CD8-positive, alpha-beta T cell (primary cell): ENCODE measurements at regions of chr20 and their contacts with region 1.

Region 1: DNA sequence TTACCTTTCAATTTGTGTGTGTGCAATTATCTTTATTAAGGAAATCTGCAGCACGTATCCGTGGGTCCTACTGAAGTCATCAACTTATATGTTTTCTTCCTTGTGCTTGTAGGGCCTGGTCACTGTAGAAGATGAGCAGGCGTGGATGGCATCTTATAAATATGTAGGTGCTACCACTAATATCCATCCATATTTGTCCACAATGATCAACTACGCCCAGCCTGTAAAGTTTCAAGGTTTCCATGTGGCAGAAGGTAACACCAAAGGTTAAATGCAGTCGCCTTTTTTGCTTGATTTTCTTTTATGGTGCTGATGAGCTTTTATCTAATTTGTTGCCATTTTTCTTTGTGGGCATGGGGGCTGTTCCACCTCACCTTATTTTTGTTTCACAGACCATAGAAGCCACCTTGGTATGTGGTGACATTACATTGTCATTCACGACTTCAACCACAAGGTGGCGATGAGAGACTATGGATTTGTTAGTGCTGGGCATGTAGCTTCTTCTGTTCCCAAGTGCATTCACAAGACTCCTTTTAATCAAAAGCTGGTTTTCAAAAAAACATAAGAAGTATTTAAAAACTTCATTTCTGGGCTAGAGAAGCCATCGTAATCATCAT is 106.5 kb upstream of the LAMP5 start:
- DNase-seq: peak in 6 of 9 experiments; percentile 6 to 51 (median 24)
- ATAC-seq: no peak
- H3K4me3 ChIP-seq: no peak overlapping the region
- H3K4me3 Mint-ChIP-seq: no peak overlapping the region
- H3K27ac ChIP-seq: no peak overlapping the region
- H3K27ac Mint-ChIP-seq: no peak overlapping the region
- H3K4me1 ChIP-seq: no peaks in the 10 kb centered on the region
- H3K4me1 Mint-ChIP-seq: no peaks in the 10 kb centered on the region
- H3K27me3 ChIP-seq: no peaks in the 10 kb centered on the region
- H3K27me3 Mint-ChIP-seq: no peaks in the 10 kb centered on the region
- CTCF ChIP-seq: peak; percentile 66

Region 2: DNA sequence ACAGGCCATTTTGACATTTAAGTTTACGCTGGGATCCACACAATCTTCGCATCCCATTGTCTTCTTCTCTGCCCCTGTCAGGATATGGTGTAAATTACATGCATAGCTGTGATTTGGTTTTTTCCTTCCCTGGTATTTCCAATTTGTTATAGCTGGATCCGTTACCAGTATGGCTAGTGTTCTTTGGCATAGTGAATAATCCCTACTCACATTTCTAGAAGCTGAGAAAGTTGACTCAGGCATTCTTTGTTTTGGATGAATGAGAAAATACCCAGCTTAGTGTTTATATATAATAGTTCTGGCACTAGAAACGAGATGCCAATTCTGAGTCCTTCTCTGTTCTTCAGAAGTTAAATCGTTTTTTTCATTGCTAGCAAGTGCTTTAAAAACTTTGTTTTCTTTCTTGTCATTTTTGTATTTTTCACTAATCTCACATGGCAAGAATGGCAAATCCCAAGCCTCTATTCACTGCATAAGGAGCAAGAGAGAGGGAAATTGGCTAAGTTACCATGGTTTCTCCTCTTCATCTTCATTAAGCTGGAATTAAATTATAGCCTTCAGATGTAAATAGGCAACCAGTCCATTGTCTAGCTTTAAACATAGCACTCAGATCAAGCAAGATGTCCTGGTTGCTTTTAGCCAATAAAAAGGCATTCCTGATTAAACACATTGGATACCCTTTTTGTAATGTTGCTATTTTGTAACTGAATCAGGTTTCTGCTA is 14.6 kb after region 1 on chr20:
- CTCF ChIA-PET with region 1: interaction called, 28 read pairs
- POLR2A ChIA-PET with region 1: no interaction called
- intact Hi-C with region 1: no loop called
- DNase-seq: no peak
- ATAC-seq: no peak
- H3K4me3 ChIP-seq: no peak overlapping the region
- H3K4me3 Mint-ChIP-seq: no peak overlapping the region
- H3K27ac ChIP-seq: no peak overlapping the region
- H3K27ac Mint-ChIP-seq: no peak overlapping the region
- H3K4me1 ChIP-seq: no peaks in the 10 kb centered on the region
- H3K4me1 Mint-ChIP-seq: no peaks in the 10 kb centered on the region
- H3K27me3 ChIP-seq: no peaks in the 10 kb centered on the region
- H3K27me3 Mint-ChIP-seq: no peaks in the 10 kb centered on the region
- CTCF ChIP-seq: no peak

Region 3: DNA sequence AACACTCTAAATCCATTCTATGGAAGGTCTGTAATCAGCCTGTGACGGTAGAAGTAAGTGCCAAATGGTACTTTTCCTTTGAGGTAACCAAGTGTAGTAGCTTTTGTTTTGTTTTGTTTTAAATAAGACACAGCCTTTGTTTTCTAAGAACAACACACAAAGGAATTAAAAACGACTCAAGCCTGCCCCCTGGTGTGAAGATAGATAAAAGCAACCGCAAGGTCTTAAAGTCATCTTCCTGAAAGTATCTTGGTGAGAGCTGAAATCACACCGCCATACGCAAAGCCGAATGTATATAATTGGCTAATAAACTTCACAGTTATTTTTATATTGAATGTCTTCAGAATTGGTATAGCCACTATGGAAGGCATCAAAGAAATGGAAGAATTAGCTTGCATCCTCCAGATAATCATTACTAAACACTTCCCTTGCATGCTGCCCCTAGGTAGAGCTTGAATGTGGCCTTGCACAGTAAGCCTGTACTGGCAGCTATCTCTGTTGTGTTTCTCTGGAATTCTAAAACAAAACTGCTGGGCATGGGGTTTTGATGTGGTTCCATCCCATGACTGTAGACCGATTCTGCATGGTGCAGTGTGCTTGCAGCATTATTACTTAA is 202.1 kb after region 1 on chr20:
- CTCF ChIA-PET with region 1: interaction called, 5 read pairs
- POLR2A ChIA-PET with region 1: no interaction called
- intact Hi-C with region 1: loop called (anchors 2 to 10 kb)
- DNase-seq: peak in 5 of 9 experiments; percentile 5 to 38 (median 20)
- ATAC-seq: no peak
- H3K4me3 ChIP-seq: no peak overlapping the region
- H3K4me3 Mint-ChIP-seq: no peak overlapping the region
- H3K27ac ChIP-seq: no peak overlapping the region
- H3K27ac Mint-ChIP-seq: no peak overlapping the region
- H3K4me1 ChIP-seq: no peaks in the 10 kb centered on the region
- H3K4me1 Mint-ChIP-seq: no peaks in the 10 kb centered on the region
- H3K27me3 ChIP-seq: no peaks in the 10 kb centered on the region
- H3K27me3 Mint-ChIP-seq: peaks cover 2% of the 10 kb centered on the region
- CTCF ChIP-seq: peak; percentile 31

Region 4: DNA sequence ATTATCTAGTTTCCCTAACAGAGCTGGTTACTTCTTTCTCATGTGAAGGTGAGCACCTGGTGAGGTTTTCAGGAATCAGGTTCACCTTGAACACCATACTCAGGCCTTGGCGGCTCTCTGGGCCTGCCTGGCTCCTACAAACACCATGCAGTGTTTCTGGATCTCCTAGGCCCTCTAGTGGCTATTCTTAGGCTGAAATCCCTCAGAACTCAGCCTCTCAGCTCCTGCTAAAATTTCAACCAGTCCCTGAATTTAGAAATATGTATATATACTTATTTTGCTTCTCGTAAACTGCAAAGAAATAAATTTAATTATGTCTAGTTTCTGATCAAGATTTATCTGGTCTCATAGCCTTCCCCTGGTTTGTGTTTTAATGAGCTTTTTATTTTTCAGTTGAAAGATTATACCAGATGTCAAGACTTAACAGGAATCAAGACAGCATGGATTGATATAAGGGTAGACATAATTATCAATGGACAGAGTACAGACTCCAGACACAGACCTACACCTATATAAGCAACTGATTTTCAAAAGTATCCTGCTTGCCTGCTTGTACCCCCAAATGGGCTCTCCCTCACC is 682.8 kb after region 1 on chr20:
- CTCF ChIA-PET with region 1: interaction called, 3 read pairs
- POLR2A ChIA-PET with region 1: no interaction called
- intact Hi-C with region 1: loop called (anchors 5 kb)
- DNase-seq: peak in 5 of 9 experiments; percentile 5 to 56 (median 24)
- ATAC-seq: peak; percentile 58
- H3K4me3 ChIP-seq: no peak overlapping the region
- H3K4me3 Mint-ChIP-seq: no peak overlapping the region
- H3K27ac ChIP-seq: no peak overlapping the region
- H3K27ac Mint-ChIP-seq: no peak overlapping the region
- H3K4me1 ChIP-seq: no peaks in the 10 kb centered on the region
- H3K4me1 Mint-ChIP-seq: no peaks in the 10 kb centered on the region
- H3K27me3 ChIP-seq: no peaks in the 10 kb centered on the region
- H3K27me3 Mint-ChIP-seq: peaks cover 6% of the 10 kb centered on the region
- CTCF ChIP-seq: peak; percentile 52

Region 5: DNA sequence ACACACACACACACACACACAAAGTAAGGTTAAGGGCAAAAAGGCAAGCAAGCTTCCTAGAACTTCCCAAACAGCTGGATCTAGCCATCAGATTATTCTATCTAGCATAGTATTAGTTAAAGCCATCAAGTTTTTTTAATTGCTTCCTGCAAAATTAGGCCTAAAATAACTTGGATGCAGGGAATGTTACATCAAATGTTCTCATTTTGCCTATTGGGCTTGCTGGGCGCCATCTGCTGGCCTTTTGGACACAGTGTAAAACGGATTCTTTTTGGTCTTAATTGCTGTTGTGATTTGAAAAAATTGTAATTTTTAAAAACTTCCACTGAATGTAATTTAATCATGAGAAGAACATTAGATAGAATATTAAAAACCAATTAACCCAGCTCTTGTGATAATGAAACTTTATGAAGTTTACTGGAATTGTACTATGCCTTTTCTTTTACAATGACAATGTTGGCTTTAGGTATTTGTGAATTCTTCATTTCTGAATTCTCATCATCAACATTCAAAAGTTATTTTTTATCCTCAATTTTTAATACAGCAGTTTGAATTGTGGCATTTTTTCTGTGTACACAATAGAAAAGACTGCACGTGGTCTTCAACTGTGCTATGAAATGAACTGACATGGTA is 1019.3 kb after region 1 on chr20:
- CTCF ChIA-PET with region 1: no interaction called
- POLR2A ChIA-PET with region 1: no interaction called
- intact Hi-C with region 1: loop called in 1 of 2 experiments (anchors 5 kb)
- DNase-seq: peak in 7 of 9 experiments; percentile 20 to 65 (median 51)
- ATAC-seq: no peak
- H3K4me3 ChIP-seq: no peak overlapping the region
- H3K4me3 Mint-ChIP-seq: no peak overlapping the region
- H3K27ac ChIP-seq: no peak overlapping the region
- H3K27ac Mint-ChIP-seq: no peak overlapping the region
- H3K4me1 ChIP-seq: peaks cover 7% of the 10 kb centered on the region
- H3K4me1 Mint-ChIP-seq: peaks cover 54% of the 10 kb centered on the region
- H3K27me3 ChIP-seq: no peaks in the 10 kb centered on the region
- H3K27me3 Mint-ChIP-seq: no peaks in the 10 kb centered on the region
- CTCF ChIP-seq: peak; percentile 86